HAP-1 (cell line): ENCODE measurements at regions of chr22 and their contacts with region 1.

Region 1: DNA sequence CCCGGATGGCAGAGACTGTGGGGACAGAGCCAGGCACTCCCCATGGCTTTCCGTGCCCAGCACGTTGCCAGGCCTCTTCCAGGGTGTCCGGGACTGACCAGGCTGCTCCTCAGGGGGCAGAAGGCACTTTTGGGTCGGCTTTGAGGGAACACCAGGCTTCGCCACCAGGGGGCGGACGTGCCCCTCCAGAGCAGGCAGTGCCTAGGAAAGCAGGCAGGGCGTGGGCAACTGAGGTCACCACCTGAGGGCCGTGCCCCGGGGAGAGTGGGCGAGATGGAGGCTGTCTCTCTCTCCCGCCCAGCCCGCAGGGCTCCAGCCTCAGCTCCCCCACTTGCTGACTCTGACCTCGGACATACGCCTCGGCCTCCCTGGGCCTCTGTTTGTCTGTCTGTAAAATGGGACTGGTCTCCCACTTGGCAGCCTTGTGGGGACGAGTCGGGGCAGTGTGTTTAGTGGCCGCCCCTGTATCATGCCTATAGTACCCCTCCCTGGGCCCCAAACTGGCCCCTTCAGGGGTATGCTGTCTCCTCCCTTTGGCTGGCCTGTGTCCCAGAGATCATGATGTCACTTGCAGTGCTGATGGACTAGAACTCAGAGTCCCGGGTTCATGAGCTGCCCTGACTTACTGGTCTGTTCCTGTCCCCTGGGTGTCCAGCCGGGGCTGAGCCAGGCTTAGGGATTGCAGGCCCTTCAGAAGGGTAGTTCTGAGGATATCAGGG is 4.4 kb upstream of the PRR5 start:
- DNase-seq: peak; percentile 60 to 91
- H3K4me3 ChIP-seq: no peak overlapping the region
- H3K4me1 ChIP-seq: peaks cover 4% of the 10 kb centered on the region
- H3K27me3 ChIP-seq: no peaks in the 10 kb centered on the region

Region 2: DNA sequence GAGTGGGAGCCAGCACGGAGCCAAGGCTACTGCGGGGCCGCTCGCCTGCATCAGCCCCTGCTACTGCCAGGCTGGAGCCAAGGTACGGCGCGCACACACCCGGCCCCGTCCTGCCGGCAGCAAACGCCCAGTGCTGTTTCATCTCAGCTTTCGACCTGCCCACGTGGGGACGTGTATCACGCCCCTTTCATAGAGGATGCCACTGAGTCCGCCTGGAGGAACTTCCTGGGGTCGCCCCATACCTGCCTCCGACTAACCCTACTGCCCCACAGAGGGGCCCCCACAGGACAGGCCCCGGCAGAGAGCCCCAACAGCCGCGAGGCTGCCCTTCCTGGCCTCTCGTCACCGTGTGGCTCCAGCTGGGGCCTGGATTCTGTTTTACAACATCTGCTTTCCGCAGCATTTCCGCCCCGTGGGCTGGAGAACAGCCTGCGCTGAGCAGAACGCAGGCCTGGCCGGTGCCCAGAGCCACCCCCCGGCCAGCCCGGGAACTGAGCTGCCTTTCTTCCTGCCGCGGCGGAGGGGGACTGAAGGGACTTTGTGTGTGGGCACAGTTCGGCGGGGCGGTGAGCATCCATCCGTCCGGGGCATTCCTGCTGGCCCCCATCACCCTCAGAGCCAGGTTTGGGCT is 31.9 kb after region 1 on chr22:
- in situ Hi-C with region 1: loop called (anchors 5 kb)
- DNase-seq: no peak
- H3K4me3 ChIP-seq: no peak overlapping the region
- H3K4me1 ChIP-seq: no peaks in the 10 kb centered on the region
- H3K27me3 ChIP-seq: no peaks in the 10 kb centered on the region

Region 3: GRCh38 chr22:44796972-44797725 is 99.6 kb after region 1 on chr22:
- in situ Hi-C with region 1: no loop called
- DNase-seq: peak in 1 of 2 experiments; percentile 27
- H3K4me3 ChIP-seq: no peak overlapping the region
- H3K4me1 ChIP-seq: peaks cover 14% of the 10 kb centered on the region
- H3K27me3 ChIP-seq: no peaks in the 10 kb centered on the region

Region 4: GRCh38 chr22:44819971-44820631 is 122.5 kb after region 1 on chr22:
- in situ Hi-C with region 1: loop called (anchors 10 kb)
- DNase-seq: no peak
- H3K4me3 ChIP-seq: no peak overlapping the region
- H3K4me1 ChIP-seq: peaks cover 3% of the 10 kb centered on the region; the same call in 1 of the 2 replicates
- H3K27me3 ChIP-seq: no peaks in the 10 kb centered on the region

Region 5: DNA sequence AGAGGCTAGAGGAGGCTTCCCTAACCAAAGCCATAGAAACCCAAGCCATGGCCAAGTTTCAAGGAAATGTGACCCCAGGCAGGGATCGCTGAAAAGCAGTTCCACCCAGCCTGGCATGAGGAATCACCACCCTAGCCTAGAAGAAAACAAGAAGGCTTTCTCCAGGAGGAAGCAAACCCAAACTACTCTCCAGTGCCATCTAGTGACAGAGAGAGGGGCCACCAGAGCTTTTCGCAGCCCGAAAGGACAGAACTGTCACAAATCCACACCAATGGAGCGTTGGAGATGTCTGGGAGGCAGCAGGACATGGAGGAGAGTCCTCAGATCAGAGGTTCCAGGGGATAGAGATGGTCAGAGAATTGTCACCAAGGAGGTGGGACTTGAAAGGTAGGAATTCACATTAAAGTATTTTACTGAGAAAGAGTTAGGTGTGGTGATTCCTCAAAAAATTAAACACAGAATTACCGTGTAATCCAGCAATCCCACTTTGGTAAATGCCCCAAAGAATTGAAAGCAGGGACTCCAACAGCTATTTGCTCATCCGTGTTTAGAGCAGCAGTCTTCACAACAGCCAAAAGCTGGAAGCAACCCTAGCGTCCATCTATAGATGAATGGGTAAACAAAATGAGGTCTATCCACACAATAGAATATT is 398.8 kb after region 1 on chr22:
- in situ Hi-C with region 1: loop called (anchors 10 kb)
- DNase-seq: peak; percentile 61 to 77
- H3K4me3 ChIP-seq: no peak overlapping the region
- H3K4me1 ChIP-seq: no peaks in the 10 kb centered on the region
- H3K27me3 ChIP-seq: no peaks in the 10 kb centered on the region